Heart right ventricle (tissue), 16 donors: ENCODE measurements at regions of chr21 and their contacts with region 1.

Region 1: GRCh38 chr21:16194095-16194787 is 464.5 kb downstream of the USP25 start:
- DNase-seq: peak; percentile 48 to 71
- ATAC-seq: peak; percentile 80 to 95 (median 92)
- H3K4me3 ChIP-seq: peak overlapping the region; percentile 9 to 59 (median 50)
- H3K27ac ChIP-seq: peak overlapping the region; percentile 47 to 86 (median 74)
- H3K4me1 ChIP-seq: peaks cover 0 to 35% (median 4%) of the 10 kb centered on the region in 9 donors
- H3K27me3 ChIP-seq: no peaks in the 10 kb centered on the region
- CTCF ChIP-seq: peak in 6 of 9 donors; percentile 28 to 65 (median 48)

Region 2: DNA sequence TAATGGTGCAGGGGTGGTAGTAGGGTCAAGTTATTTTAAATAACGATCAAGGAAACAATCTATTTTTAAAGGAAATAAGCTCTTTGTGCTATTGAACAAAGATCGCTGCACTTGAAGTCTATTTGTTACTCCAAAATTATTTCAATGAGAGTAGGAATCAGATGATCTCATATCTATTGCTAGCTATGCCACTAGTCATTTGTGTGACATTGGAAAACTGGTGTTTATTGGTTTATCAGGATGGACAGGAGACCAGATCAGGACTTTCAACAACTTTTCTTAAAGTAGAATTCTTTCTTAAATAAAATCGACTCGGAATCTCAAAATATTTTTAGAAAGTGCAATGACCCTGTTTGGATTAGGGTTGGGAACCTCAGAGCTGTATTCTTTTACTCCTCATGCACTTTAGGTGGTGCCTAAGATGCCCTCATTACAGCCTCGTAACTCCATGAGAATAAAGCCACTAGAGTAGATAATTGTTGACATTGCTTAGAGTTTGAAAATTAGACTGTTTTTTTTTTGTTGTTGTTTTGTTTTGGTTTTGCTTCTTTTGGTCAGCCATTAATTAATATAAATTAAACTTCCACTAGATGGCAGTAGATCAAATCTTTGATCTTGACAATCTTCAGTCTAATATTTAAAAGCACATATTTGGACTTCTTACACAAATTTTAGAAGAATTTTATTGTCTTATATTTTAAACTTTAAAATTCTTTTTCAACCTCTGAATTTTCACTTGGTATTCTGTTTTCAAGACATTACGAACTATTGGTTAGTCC is 112.0 kb before region 1 on chr21:
- intact Hi-C with region 1: loop called in 2 of 10 experiments (anchors 5 to 10 kb)
- DNase-seq: no peak
- ATAC-seq: peak in 2 of 8 donors; percentile 33 to 38
- H3K4me3 ChIP-seq: peak overlapping the region in 5 of 10 donors; percentile 17 to 35 (median 33)
- H3K27ac ChIP-seq: peak overlapping the region in 1 of 10 donors; percentile 23
- H3K4me1 ChIP-seq: peaks cover 0 to 14% (median 4%) of the 10 kb centered on the region in 9 donors
- H3K27me3 ChIP-seq: no peaks in the 10 kb centered on the region
- CTCF ChIP-seq: peak; percentile 28 to 73 (median 54)

Region 3: GRCh38 chr21:16302851-16303282 is 108.6 kb after region 1 on chr21:
- intact Hi-C with region 1: loop called in 3 of 10 experiments (anchors 5 to 10 kb)
- DNase-seq: peak in 1 of 2 donors; percentile 49
- ATAC-seq: peak; percentile 70 to 94 (median 88)
- H3K4me3 ChIP-seq: no peak overlapping the region
- H3K27ac ChIP-seq: peak overlapping the region in 8 of 10 donors; percentile 49 to 82 (median 69)
- H3K4me1 ChIP-seq: peaks cover 0 to 41% (median 10%) of the 10 kb centered on the region in 9 donors
- H3K27me3 ChIP-seq: no peaks in the 10 kb centered on the region
- CTCF ChIP-seq: no peak

Region 4: GRCh38 chr21:16308269-16308668 is 114.0 kb after region 1 on chr21:
- intact Hi-C with region 1: loop called in 3 of 10 experiments (anchors 5 to 10 kb)
- DNase-seq: no peak
- ATAC-seq: peak in 2 of 8 donors; percentile 30 to 46
- H3K4me3 ChIP-seq: peak overlapping the region in 8 of 10 donors; percentile 9 to 43 (median 32)
- H3K27ac ChIP-seq: peak overlapping the region in 8 of 10 donors; percentile 14 to 82 (median 66)
- H3K4me1 ChIP-seq: peaks cover 0 to 25% (median 0%) of the 10 kb centered on the region in 9 donors
- H3K27me3 ChIP-seq: no peaks in the 10 kb centered on the region
- CTCF ChIP-seq: no peak